GM10248 (cell line): ENCODE measurements at regions of chr4 and their contacts with region 1.

Region 1: GRCh38 chr4:10013722-10014121 is 7.6 kb downstream of the SLC2A9 start:
- DNase-seq: peak; percentile 63
- CTCF ChIP-seq: peak; percentile 54

Region 2: GRCh38 chr4:9762823-9763475 is 250.8 kb before region 1 on chr4:
- CTCF ChIA-PET with region 1: interaction called, 162 read pairs
- POLR2A ChIA-PET with region 1: no interaction called
- DNase-seq: peak; percentile 73
- CTCF ChIP-seq: peak; percentile 83

Region 3: GRCh38 chr4:9800848-9801247 is 212.9 kb before region 1 on chr4:
- CTCF ChIA-PET with region 1: interaction called, 18 read pairs
- POLR2A ChIA-PET with region 1: no interaction called
- DNase-seq: no peak
- CTCF ChIP-seq: no peak

Region 4: DNA sequence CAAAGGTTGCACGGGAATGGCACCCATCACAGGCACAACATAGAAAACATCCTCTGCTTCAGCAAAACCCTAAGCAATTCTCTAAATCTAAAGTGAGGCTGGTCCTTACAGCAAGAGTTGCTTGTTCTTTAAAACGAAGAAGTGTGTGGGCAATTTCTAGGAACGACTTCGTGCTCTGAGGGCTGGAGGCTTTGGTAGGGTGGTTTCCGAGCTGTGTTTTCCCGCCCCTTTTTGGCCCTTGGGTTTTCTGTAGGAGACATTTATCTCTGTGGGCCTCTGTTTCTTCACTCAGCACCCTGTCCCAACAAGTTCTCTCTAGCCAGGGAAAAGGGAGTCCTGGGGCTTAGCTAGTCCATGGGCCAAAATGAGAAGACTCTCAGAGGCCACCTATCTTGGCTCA is 76.6 kb before region 1 on chr4:
- CTCF ChIA-PET with region 1: interaction called, 14 read pairs
- POLR2A ChIA-PET with region 1: no interaction called
- DNase-seq: no peak
- CTCF ChIP-seq: no peak

Region 5: DNA sequence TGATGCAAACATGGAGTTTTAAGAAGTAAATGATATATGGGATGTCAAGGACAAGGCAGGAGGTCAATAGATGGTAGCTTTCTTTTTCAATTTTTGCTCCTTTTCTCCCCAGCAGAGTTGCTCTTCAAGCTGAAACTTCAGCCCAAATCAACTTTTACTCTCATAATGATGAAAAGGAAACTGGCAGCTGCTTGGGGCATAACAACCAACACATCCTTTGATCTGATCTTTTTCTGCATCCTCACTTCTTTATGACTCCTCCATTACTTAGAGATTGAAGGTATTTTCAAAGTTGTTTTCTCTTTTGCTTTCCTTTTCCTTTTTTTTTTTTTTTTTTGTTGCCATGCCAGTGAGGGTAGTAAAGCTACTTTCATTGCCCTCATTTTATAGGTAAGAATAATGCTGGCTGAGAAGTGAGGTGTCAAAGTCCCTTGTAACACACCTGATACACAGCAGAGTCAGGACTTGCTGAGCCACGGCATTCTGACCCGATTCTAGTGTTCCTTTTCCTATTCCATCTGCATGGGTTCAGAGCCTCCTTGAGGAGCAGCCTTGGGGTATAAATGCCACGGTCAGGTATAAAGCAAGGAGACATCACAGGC is 19.4 kb before region 1 on chr4:
- CTCF ChIA-PET with region 1: interaction called, 49 read pairs
- POLR2A ChIA-PET with region 1: no interaction called
- DNase-seq: no peak
- CTCF ChIP-seq: no peak

Region 6: GRCh38 chr4:10033191-10033881 is 19.6 kb after region 1 on chr4:
- CTCF ChIA-PET with region 1: interaction called, 30 read pairs
- POLR2A ChIA-PET with region 1: no interaction called
- DNase-seq: no peak
- CTCF ChIP-seq: no peak